ENCODE measurements at regions of chrX and their contacts with region 1.

Region 1: DNA sequence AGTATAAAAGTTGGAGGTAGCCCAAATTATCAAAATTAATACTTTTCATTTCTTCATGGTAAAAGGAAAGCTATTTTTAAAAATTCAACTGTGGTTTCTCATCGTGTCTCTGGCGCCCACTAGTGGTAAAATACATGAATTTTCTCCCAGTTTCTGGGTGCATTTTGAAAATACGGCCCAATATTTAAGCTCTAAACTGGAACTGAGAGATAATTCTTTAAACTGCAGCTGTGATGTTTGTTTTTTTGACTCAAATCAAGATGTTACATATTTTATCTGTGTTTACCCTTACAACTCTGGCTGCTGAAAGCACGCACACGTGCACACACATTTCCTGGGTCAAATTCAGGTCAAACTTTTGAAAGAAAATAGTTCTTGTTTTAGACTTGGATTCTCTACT is 123.9 kb upstream of the ACSL4 start:
- H3K4me3 ChIP-seq: no peak overlapping the region
- H3K27ac ChIP-seq: no peak overlapping the region
- H3K4me1 ChIP-seq: no peaks in the 10 kb centered on the region
- CTCF ChIP-seq: no peak

Region 2: GRCh38 chrX:109635176-109635575 is 221.8 kb before region 1 on chrX:
- CTCF ChIA-PET with region 1: interaction called, 22 read pairs
- POLR2A ChIA-PET with region 1: no interaction called
- H3K4me3 ChIP-seq: no peak overlapping the region
- H3K27ac ChIP-seq: no peak overlapping the region
- H3K4me1 ChIP-seq: no peaks in the 10 kb centered on the region
- CTCF ChIP-seq: 0 out of 2 replicates have a peak, but pooled peaks have one; percentile 7

Region 3: GRCh38 chrX:109709129-109709631 is 147.8 kb before region 1 on chrX:
- CTCF ChIA-PET with region 1: interaction called, 180 read pairs
- POLR2A ChIA-PET with region 1: no interaction called
- H3K4me3 ChIP-seq: no peak overlapping the region
- H3K27ac ChIP-seq: no peak overlapping the region
- H3K4me1 ChIP-seq: peaks cover 3% of the 10 kb centered on the region; the same call in 1 of the 2 replicates
- CTCF ChIP-seq: no peak

Region 4: GRCh38 chrX:109826954-109827708 is 29.8 kb before region 1 on chrX:
- CTCF ChIA-PET with region 1: interaction called, 17 read pairs
- POLR2A ChIA-PET with region 1: no interaction called
- H3K4me3 ChIP-seq: no peak overlapping the region
- H3K27ac ChIP-seq: no peak overlapping the region
- H3K4me1 ChIP-seq: no peaks in the 10 kb centered on the region
- CTCF ChIP-seq: no peak

Region 5: DNA sequence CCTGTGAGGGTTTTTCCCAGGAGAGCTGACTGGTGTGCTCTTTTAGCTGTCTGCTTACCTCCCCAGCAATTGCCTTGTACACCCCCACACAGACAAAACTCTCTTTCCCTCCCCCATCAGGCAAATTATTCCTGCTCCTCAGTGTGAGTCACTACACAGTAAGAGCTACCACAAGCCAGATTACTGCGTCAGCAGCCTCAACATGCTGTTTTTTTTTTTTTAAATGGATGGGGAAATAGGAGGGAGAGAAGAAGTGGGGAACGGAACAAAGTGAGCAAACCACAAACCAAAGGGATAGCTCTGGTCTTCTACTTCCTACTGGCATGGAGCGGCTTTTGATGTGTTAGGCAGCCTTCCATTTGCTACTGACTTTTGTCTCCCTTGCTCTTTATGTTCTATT is 16.4 kb before region 1 on chrX:
- CTCF ChIA-PET with region 1: interaction called, 90 read pairs
- POLR2A ChIA-PET with region 1: no interaction called
- H3K4me3 ChIP-seq: no peak overlapping the region
- H3K27ac ChIP-seq: peak overlapping the region; percentile 20; the same call in 1 of the 2 replicates
- H3K4me1 ChIP-seq: peaks cover 5% of the 10 kb centered on the region; the same call in 1 of the 2 replicates
- CTCF ChIP-seq: no peak

Region 6: GRCh38 chrX:109880629-109881028 is 23.7 kb after region 1 on chrX:
- CTCF ChIA-PET with region 1: interaction called, 15 read pairs
- POLR2A ChIA-PET with region 1: no interaction called
- H3K4me3 ChIP-seq: no peak overlapping the region
- H3K27ac ChIP-seq: no peak overlapping the region
- H3K4me1 ChIP-seq: no peaks in the 10 kb centered on the region
- CTCF ChIP-seq: no peak

Region 7: GRCh38 chrX:109920325-109920724 is 63.4 kb after region 1 on chrX:
- CTCF ChIA-PET with region 1: no interaction called
- POLR2A ChIA-PET with region 1: no interaction called
- H3K4me3 ChIP-seq: no peak overlapping the region
- H3K27ac ChIP-seq: no peak overlapping the region
- H3K4me1 ChIP-seq: no peaks in the 10 kb centered on the region
- CTCF ChIP-seq: no peak